ENCODE measurements at regions of chr22 and their contacts with region 1.

Region 1: DNA sequence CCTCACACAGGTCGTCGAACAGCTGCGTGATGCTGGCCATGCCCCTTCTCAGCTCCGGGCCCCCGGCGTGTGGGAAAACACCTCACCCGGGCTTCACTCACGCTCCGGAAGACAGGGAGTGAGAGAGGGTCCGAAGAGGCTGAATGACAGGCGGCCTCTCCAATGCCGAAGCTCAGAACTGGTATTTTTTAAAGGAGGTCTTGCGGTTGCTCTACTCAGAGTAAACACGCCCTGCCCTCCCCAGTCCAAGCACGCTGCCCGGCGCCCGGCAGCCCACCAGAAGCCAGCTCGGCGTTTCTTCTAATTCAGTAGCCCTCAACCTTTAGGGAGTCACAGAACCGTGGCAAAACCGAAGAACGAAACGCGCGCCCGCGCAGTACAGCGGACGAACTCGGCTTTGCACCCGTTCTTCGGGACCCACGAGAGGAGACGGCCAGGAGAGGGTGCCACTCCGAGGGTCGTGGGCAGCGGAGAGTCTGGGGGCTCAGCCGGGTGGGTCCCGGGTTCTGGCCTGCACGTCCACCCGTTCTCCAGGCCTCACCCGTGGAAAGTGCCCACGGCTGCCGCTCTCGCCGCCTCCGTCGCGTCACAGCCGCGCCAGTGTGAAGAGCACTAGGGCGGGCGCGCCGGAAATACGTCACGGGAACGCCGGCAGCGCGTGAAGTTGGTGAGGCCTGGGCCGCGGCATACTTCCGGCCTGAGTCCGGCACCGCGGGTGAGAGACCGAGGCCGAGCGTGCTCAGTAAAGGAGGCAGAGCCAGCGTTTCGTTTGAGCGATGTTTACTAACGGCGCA is at the start of gene TUBGCP6:
- DNase-seq: peak; percentile 91
- H3K4me3 Mint-ChIP-seq: peak within 1 kb of the TSS; percentile 96
- H3K27ac Mint-ChIP-seq: peak within 1 kb of the TSS; percentile 99
- H3K4me1 Mint-ChIP-seq: peaks cover 16% of the 10 kb centered on the region
- H3K27me3 Mint-ChIP-seq: no peaks in the 10 kb centered on the region
- CTCF ChIP-seq: no peak
- total RNA-seq, gene TUBGCP6: 27.6 and 27.9 TPM in 2 replicates

Region 2: DNA sequence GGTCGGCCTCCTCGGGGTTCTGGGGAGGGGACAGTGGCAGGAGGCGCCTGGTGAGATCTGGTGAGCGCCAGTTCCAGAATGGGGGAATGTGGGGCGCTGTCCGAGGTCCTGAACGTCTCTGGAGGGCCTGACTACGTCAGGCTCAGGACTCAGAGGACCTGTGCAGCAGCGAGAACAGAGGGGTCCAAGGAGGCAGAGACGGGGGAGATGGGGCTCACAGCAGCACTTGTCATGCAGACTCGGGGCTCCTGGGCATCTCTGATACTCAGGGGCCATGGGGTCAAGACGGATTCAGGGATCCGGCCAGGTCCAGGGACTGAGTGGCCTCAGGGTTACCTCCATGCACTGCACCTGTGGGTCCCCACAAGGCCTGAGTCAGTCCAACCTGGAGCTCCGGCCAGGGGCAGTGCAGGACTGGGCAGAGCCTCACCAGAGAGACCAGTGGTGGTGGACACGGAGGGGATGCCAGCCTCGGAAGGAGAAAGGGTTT is 509.2 kb before region 1 on chr22:
- CTCF ChIA-PET with region 1: no interaction called
- POLR2A ChIA-PET with region 1: no interaction called
- intact Hi-C with region 1: no loop called
- DNase-seq: no peak
- H3K4me3 Mint-ChIP-seq: no peak overlapping the region
- H3K27ac Mint-ChIP-seq: no peak overlapping the region
- H3K4me1 Mint-ChIP-seq: no peaks in the 10 kb centered on the region
- H3K27me3 Mint-ChIP-seq: no peaks in the 10 kb centered on the region
- CTCF ChIP-seq: no peak

Region 3: GRCh38 chr22:50161508-50162390 is 82.9 kb before region 1 on chr22:
- CTCF ChIA-PET with region 1: no interaction called
- POLR2A ChIA-PET with region 1: no interaction called
- intact Hi-C with region 1: no loop called
- DNase-seq: no peak
- H3K4me3 Mint-ChIP-seq: no peak overlapping the region
- H3K27ac Mint-ChIP-seq: no peak overlapping the region
- H3K4me1 Mint-ChIP-seq: peaks cover 11% of the 10 kb centered on the region
- H3K27me3 Mint-ChIP-seq: no peaks in the 10 kb centered on the region
- CTCF ChIP-seq: no peak

Region 4: GRCh38 chr22:50260801-50261614 is 16.4 kb after region 1 on chr22:
- CTCF ChIA-PET with region 1: interaction called, 5 read pairs
- POLR2A ChIA-PET with region 1: interaction called, 10 read pairs
- intact Hi-C with region 1: no loop called
- DNase-seq: peak; percentile 57
- H3K4me3 Mint-ChIP-seq: peak overlapping the region; percentile 61
- H3K27ac Mint-ChIP-seq: no peak overlapping the region
- H3K4me1 Mint-ChIP-seq: peaks cover 5% of the 10 kb centered on the region
- H3K27me3 Mint-ChIP-seq: no peaks in the 10 kb centered on the region
- CTCF ChIP-seq: no peak

Region 5: GRCh38 chr22:50361688-50362087 is 117.1 kb after region 1 on chr22:
- CTCF ChIA-PET with region 1: interaction called, 4 read pairs
- POLR2A ChIA-PET with region 1: interaction called, 7 read pairs
- intact Hi-C with region 1: loop called (anchors 1 kb)
- DNase-seq: no peak
- H3K4me3 Mint-ChIP-seq: no peak overlapping the region
- H3K27ac Mint-ChIP-seq: no peak overlapping the region
- H3K4me1 Mint-ChIP-seq: peaks cover 6% of the 10 kb centered on the region
- H3K27me3 Mint-ChIP-seq: no peaks in the 10 kb centered on the region
- CTCF ChIP-seq: no peak

Region 6: DNA sequence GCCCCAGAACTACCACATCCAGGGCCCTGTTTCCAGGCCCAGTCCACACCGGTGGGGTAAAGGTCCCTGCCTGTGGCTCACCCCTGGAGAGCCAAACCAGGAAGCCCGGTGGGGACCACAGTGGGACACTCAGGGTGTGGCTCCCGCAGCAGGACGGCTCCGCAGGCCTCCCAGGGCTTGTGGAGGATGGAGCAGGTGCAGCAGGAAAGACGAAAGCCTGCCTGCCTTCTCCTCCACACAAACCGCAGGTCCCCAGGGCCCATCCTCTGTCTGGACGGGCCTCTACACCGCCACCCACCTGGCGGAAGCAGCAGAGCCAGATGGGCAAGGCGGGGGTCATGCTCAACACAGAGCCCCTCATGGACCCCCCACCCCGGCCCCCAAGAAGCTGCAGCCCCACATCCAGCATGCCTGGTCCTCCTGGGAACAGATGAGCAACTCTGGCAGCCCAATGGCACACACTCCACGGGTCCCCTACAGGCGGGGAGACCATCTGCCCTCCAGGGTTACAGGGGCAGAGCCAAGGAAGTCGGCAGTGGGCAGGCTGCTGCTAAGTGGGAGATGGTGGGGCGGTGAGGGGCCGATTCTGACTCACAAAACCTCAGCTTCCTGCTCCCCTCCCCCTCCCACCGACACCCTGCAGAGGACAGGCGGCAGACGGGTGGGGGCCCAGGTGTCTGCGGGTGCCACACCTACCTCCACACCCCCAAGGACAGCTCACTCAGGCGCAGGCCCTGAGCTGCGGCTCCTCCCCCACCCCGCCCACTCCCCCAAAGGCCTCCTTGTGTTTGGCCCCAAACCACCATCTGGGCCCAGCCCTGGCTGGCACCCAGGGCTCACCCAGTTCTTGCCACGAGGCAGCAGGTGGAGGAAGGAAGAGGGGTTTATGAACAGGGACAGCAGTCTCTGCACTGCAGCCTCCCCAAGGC is 225.0 kb after region 1 on chr22:
- CTCF ChIA-PET with region 1: no interaction called
- POLR2A ChIA-PET with region 1: no interaction called
- intact Hi-C with region 1: no loop called
- DNase-seq: peak; percentile 82
- H3K4me3 Mint-ChIP-seq: peak overlapping the region; percentile 16
- H3K27ac Mint-ChIP-seq: peak overlapping the region; percentile 59
- H3K4me1 Mint-ChIP-seq: peaks cover 24% of the 10 kb centered on the region
- H3K27me3 Mint-ChIP-seq: no peaks in the 10 kb centered on the region
- CTCF ChIP-seq: no peak

Measured in MCF 10A (cell line).